ENCODE measurements at regions of chr19 and their contacts with region 1.

Region 1: GRCh38 chr19:39445265-39446111 is at the start of gene SUPT5H:
- DNase-seq: peak; percentile 96 to 99 (median 99)
- H3K4me3 ChIP-seq: peak within 1 kb of the TSS; percentile 98
- H3K4me3 Mint-ChIP-seq: peak within 1 kb of the TSS; percentile 89 to 98 (median 96)
- H3K27ac ChIP-seq: peak within 1 kb of the TSS; percentile 99
- H3K27ac Mint-ChIP-seq: peak within 1 kb of the TSS; percentile 88 to 98 (median 95)
- H3K4me1 ChIP-seq: peaks cover 52% of the 10 kb centered on the region
- H3K4me1 Mint-ChIP-seq: peaks cover 38 to 65% (median 48%) of the 10 kb centered on the region in 4 donors
- H3K27me3 ChIP-seq: no peaks in the 10 kb centered on the region
- H3K27me3 Mint-ChIP-seq: peaks cover 0 to 2% of the 10 kb centered on the region in 2 donors
- total RNA-seq, gene SUPT5H: 234 to 236 TPM

Region 2: GRCh38 chr19:38891771-38892170 is 553.7 kb before region 1 on chr19:
- CTCF ChIA-PET with region 1: no interaction called
- POLR2A ChIA-PET with region 1: no interaction called
- intact Hi-C with region 1: no loop called
- DNase-seq: no peak
- H3K4me3 ChIP-seq: no peak overlapping the region
- H3K4me3 Mint-ChIP-seq: no peak overlapping the region
- H3K27ac ChIP-seq: no peak overlapping the region
- H3K27ac Mint-ChIP-seq: peak overlapping the region in 1 of 7 donors; percentile 13
- H3K4me1 ChIP-seq: peaks cover 4% of the 10 kb centered on the region
- H3K4me1 Mint-ChIP-seq: peaks cover 2 to 13% (median 5%) of the 10 kb centered on the region in 4 donors
- H3K27me3 ChIP-seq: no peaks in the 10 kb centered on the region
- H3K27me3 Mint-ChIP-seq: no peaks in the 10 kb centered on the region

Region 3: GRCh38 chr19:39397360-39398296 is 47.9 kb before region 1 on chr19:
- CTCF ChIA-PET with region 1: interaction called, 8 read pairs
- POLR2A ChIA-PET with region 1: interaction called, 17 read pairs
- intact Hi-C with region 1: loop called (anchors 2 kb)
- DNase-seq: peak; percentile 90 to 91 (median 91)
- H3K4me3 ChIP-seq: peak overlapping the region in 1 of 2 donors; percentile 21
- H3K4me3 Mint-ChIP-seq: peak overlapping the region; percentile 57 to 70 (median 64)
- H3K27ac ChIP-seq: peak overlapping the region; percentile 72
- H3K27ac Mint-ChIP-seq: peak overlapping the region; percentile 94 to 100 (median 97)
- H3K4me1 ChIP-seq: peaks cover 58% of the 10 kb centered on the region
- H3K4me1 Mint-ChIP-seq: peaks cover 32 to 67% (median 53%) of the 10 kb centered on the region in 4 donors
- H3K27me3 ChIP-seq: no peaks in the 10 kb centered on the region
- H3K27me3 Mint-ChIP-seq: no peaks in the 10 kb centered on the region

Region 4: GRCh38 chr19:39474139-39474622 is 28.7 kb after region 1 on chr19:
- CTCF ChIA-PET with region 1: interaction called, 13 read pairs
- POLR2A ChIA-PET with region 1: interaction called, 6 read pairs
- intact Hi-C with region 1: no loop called
- DNase-seq: peak; percentile 64 to 72 (median 70)
- H3K4me3 ChIP-seq: no peak overlapping the region
- H3K4me3 Mint-ChIP-seq: no peak overlapping the region
- H3K27ac ChIP-seq: no peak overlapping the region
- H3K27ac Mint-ChIP-seq: peak overlapping the region in 4 of 7 donors; percentile 46 to 81 (median 56)
- H3K4me1 ChIP-seq: no peaks in the 10 kb centered on the region
- H3K4me1 Mint-ChIP-seq: peaks cover 0 to 6% (median 4%) of the 10 kb centered on the region in 4 donors
- H3K27me3 ChIP-seq: no peaks in the 10 kb centered on the region
- H3K27me3 Mint-ChIP-seq: no peaks in the 10 kb centered on the region

Region 5: DNA sequence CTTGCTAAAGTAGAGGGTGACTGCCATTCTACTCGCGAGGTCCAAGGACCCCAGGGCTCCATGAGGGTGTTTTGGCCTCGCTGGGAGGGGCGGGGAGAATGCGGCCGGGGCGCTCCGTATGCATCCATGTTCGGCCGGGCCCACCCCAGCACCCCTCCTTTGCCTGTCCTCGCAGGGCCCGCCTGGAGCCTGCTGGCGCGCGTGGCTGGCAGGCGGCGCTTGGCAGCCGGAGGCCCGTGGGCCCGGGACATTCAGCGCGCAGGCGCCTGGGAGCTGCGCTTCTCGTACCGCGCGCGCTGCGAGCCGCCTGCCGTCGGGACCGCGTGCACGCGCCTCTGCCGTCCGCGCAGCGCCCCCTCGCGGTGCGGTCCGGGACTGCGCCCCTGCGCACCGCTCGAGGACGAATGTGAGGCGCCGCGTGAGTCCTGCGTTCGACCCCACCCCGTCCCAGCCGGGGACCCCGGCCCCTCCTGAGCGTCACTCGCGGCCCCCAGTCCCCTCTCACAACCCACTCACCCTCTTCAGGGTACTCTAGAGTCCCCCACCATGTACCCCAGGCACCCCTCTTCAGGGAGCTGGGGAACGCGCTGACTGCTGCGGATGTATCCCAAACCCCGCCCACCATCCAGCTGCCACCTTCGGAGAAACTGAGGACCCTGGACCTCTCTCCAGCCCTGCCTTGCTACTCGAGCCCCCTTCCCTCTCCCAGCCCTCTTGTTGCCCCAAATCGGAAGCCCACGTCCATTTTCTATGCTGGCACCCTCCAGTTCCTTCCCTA is 57.3 kb after region 1 on chr19:
- CTCF ChIA-PET with region 1: interaction called, 19 read pairs
- POLR2A ChIA-PET with region 1: interaction called, 6 read pairs
- intact Hi-C with region 1: loop called (anchors 1 kb)
- DNase-seq: peak; percentile 72 to 82 (median 81)
- H3K4me3 ChIP-seq: no peak overlapping the region
- H3K4me3 Mint-ChIP-seq: peak overlapping the region in 4 of 8 donors; percentile 9 to 61 (median 40)
- H3K27ac ChIP-seq: no peak overlapping the region
- H3K27ac Mint-ChIP-seq: peak overlapping the region in 2 of 7 donors; percentile 36 to 71
- H3K4me1 ChIP-seq: peaks cover 36% of the 10 kb centered on the region
- H3K4me1 Mint-ChIP-seq: peaks cover 24 to 65% (median 33%) of the 10 kb centered on the region in 4 donors
- H3K27me3 ChIP-seq: peaks cover 34% of the 10 kb centered on the region
- H3K27me3 Mint-ChIP-seq: peaks cover 45 to 59% of the 10 kb centered on the region in 2 donors

Region 6: DNA sequence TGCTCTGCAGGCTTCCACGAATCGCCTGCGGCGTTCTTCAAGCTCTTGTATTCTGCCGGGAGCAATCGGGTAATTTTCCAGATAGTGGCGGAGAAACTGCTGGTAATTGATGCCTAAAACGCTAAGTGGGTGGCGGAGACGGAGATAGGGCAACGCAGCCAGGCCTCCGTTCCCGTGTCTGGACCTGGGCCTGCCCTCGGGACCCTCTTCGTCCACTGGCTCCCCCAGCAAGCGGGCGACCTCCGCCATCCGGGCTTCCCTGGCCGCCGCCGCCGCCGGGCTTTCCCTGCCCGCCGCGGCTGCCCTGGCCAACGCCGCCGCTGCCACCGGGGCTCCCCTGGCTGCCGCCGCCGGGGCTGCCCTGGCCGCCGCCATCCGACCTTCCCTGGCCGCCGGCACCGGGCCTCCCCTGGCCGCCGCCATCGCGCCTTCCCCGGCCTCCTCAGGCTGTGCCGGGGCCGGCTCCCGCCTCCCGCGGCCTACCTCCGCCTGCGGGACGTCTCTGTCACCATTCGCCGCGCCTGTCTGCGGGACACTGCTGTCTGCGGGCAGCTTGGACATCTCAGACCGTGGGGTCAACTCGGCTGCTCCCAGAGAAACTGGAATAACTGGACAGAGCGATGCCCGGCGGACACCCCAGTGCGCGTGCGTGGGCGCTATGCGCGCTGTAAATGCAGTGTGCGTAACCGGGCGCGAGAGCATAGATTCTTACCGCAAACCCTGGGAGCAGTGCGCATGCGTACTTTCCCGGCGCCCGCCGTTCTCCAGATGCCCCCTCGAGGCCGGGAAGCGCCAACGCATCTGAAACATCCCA is 94.2 kb after region 1 on chr19 and contains the start of gene EID2:
- CTCF ChIA-PET with region 1: interaction called, 56 read pairs
- POLR2A ChIA-PET with region 1: interaction called, 6 read pairs
- intact Hi-C with region 1: loop called (anchors 1 kb)
- DNase-seq: peak; percentile 91 to 93 (median 92)
- H3K4me3 ChIP-seq: peak within 1 kb of the TSS; percentile 43 to 81
- H3K4me3 Mint-ChIP-seq: peak within 1 kb of the TSS; percentile 95 to 99 (median 97)
- H3K27ac ChIP-seq: peak within 1 kb of the TSS; percentile 86
- H3K27ac Mint-ChIP-seq: peak within 1 kb of the TSS; percentile 91 to 100 (median 99)
- H3K4me1 ChIP-seq: peaks cover 45% of the 10 kb centered on the region
- H3K4me1 Mint-ChIP-seq: peaks cover 31 to 69% (median 50%) of the 10 kb centered on the region in 4 donors
- H3K27me3 ChIP-seq: no peaks in the 10 kb centered on the region
- H3K27me3 Mint-ChIP-seq: peaks cover 0 to 1% of the 10 kb centered on the region in 2 donors
- total RNA-seq, gene EID2: 22.0 to 22.8 TPM

Region 7: DNA sequence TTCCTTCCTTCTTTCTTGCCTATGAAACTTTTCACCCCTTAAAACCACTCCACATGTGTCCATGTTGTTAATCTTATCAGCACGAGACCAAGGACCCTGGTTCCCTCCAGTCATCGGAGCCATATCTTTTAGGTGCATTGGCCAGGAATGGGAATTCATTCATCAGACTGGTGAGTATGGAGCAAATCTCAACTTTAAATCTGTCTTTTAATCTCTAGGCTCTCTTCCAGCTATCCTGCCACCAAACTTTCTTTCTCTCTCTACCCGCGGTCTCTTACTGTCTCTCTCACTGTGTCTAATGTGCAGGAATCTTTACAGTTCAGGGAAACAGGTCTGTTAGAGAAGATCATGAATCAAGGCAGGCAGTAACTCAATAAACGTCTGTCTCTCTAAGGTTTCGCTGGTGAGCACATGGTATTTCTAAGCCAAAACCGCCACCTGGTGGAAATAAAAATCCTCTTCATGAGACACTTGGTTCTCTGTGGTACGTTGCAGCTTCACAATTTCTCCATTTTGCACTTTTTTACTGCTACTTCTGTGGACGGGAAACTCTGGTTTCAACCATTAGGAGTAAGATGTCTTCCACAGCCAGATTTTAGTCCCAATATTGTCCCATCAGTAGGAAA is 226.4 kb after region 1 on chr19:
- CTCF ChIA-PET with region 1: interaction called, 46 read pairs
- POLR2A ChIA-PET with region 1: interaction called, 5 read pairs
- intact Hi-C with region 1: loop called (anchors 1 kb)
- DNase-seq: peak; percentile 50 to 60 (median 59)
- H3K4me3 ChIP-seq: no peak overlapping the region
- H3K4me3 Mint-ChIP-seq: peak overlapping the region in 3 of 8 donors; percentile 5 to 20 (median 17)
- H3K27ac ChIP-seq: no peak overlapping the region
- H3K27ac Mint-ChIP-seq: peak overlapping the region in 1 of 7 donors; percentile 9
- H3K4me1 ChIP-seq: peaks cover 24% of the 10 kb centered on the region
- H3K4me1 Mint-ChIP-seq: peaks cover 5 to 33% (median 19%) of the 10 kb centered on the region in 4 donors
- H3K27me3 ChIP-seq: no peaks in the 10 kb centered on the region
- H3K27me3 Mint-ChIP-seq: peaks cover 6 to 10% of the 10 kb centered on the region in 2 donors

Measured in CD4-positive, alpha-beta memory T cell (primary cell).